ENCODE measurements at regions of chr11 and their contacts with region 1.

Region 1: GRCh38 chr11:116232364-116232828 is 540.4 kb downstream of the BUD13 start:
- DNase-seq: no peak
- H3K4me3 Mint-ChIP-seq: no peak overlapping the region
- H3K27ac Mint-ChIP-seq: no peak overlapping the region
- H3K4me1 Mint-ChIP-seq: no peaks in the 10 kb centered on the region
- H3K27me3 Mint-ChIP-seq: no peaks in the 10 kb centered on the region
- CTCF ChIP-seq: no peak

Region 2: DNA sequence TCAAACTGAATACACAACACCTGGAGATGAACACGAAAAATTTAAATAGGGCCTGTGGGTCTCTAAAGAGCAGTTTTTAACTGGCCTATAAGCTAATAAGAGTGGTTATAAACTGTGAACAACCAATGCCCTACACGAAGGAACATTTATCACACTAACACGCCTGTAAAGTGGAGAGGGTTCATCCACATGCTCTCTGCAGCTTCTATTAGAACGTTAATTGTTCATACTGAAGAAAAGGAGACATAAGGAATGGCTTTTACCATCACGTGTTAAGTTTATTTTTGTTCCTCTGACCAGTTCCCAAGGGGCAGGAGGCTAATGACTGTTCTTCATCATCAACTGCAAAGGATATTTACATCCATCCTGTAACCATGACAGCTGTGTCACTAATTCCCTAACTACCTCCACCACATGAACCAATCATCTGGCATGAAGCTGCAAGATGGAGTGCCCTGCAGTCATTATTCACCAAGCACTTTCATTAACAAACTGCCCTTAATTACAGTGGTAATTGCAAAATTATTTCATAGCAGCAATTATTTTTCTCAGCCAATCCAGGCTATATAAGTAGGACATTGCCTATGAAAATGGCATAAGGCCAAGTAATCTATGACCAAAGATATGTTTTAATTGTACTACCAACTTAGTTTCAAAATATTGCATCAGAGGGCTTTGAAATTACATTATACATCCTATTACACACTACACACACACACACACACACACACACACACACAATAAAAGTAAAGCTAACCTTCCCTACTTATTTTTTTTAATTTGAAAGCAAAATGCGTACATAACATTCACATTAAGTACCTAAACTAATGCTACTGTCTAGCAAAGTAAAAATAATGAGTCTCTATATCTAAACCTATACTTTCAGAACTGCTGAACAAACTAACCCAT is 914.9 kb before region 1 on chr11:
- CTCF ChIA-PET with region 1: no interaction called
- POLR2A ChIA-PET with region 1: no interaction called
- intact Hi-C with region 1: no loop called
- DNase-seq: no peak
- H3K4me3 Mint-ChIP-seq: no peak overlapping the region
- H3K27ac Mint-ChIP-seq: no peak overlapping the region
- H3K4me1 Mint-ChIP-seq: peaks cover 6% of the 10 kb centered on the region
- H3K27me3 Mint-ChIP-seq: peaks cover 51% of the 10 kb centered on the region
- CTCF ChIP-seq: no peak

Region 3: GRCh38 chr11:116217006-116217405 is 15.4 kb before region 1 on chr11:
- CTCF ChIA-PET with region 1: interaction called, 14 read pairs
- POLR2A ChIA-PET with region 1: no interaction called
- intact Hi-C with region 1: no loop called
- DNase-seq: peak; percentile 22
- H3K4me3 Mint-ChIP-seq: no peak overlapping the region
- H3K27ac Mint-ChIP-seq: no peak overlapping the region
- H3K4me1 Mint-ChIP-seq: no peaks in the 10 kb centered on the region
- H3K27me3 Mint-ChIP-seq: no peaks in the 10 kb centered on the region
- CTCF ChIP-seq: peak; percentile 13

Measured in MCF 10A (cell line).